Activated naive CD4-positive, alpha-beta T cell treated with anti-CD3 and anti-CD28 coated beads for 36 hours (primary cell): ENCODE measurements at regions of chr6 and their contacts with region 1.

Region 1: GRCh38 chr6:95431637-95432228 is 145.6 kb upstream of the MANEA start:
- DNase-seq: peak; percentile 62
- H3K4me3 Mint-ChIP-seq: no peak overlapping the region
- H3K27ac Mint-ChIP-seq: no peak overlapping the region
- H3K4me1 Mint-ChIP-seq: no peaks in the 10 kb centered on the region
- H3K27me3 Mint-ChIP-seq: peaks cover 2% of the 10 kb centered on the region

Region 2: GRCh38 chr6:95364016-95364604 is 67.6 kb before region 1 on chr6:
- CTCF ChIA-PET with region 1: no interaction called
- intact Hi-C with region 1: loop called (anchors 2 kb)
- DNase-seq: no peak
- H3K4me3 Mint-ChIP-seq: no peak overlapping the region
- H3K27ac Mint-ChIP-seq: no peak overlapping the region
- H3K4me1 Mint-ChIP-seq: no peaks in the 10 kb centered on the region
- H3K27me3 Mint-ChIP-seq: no peaks in the 10 kb centered on the region

Region 3: GRCh38 chr6:95469511-95469910 is 37.8 kb after region 1 on chr6:
- CTCF ChIA-PET with region 1: no interaction called
- intact Hi-C with region 1: no loop called
- DNase-seq: no peak
- H3K4me3 Mint-ChIP-seq: no peak overlapping the region
- H3K27ac Mint-ChIP-seq: no peak overlapping the region
- H3K4me1 Mint-ChIP-seq: no peaks in the 10 kb centered on the region
- H3K27me3 Mint-ChIP-seq: peaks cover 12% of the 10 kb centered on the region

Region 4: DNA sequence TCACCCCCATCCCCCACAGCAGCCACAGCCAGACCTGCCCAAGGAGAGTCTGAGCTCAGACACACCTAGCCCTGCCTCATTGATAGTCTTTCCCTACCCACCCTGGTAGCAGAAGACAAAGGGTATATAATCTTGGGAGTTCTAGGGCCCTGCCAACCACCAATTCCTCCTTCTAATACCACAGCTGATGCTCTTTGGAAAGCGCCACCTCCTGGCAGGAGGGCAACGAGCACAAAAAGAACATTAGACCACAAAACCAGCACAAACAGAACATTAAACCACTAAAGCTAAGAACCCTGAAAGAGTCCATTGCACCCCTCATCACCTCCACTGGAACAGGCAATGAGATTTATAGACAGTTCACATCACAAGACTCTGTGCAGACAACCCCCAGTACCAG is 388.2 kb after region 1 on chr6:
- CTCF ChIA-PET with region 1: no interaction called
- intact Hi-C with region 1: loop called (anchors 1 kb)
- DNase-seq: no peak
- H3K4me3 Mint-ChIP-seq: no peak overlapping the region
- H3K27ac Mint-ChIP-seq: no peak overlapping the region
- H3K4me1 Mint-ChIP-seq: no peaks in the 10 kb centered on the region
- H3K27me3 Mint-ChIP-seq: no peaks in the 10 kb centered on the region

Region 5: DNA sequence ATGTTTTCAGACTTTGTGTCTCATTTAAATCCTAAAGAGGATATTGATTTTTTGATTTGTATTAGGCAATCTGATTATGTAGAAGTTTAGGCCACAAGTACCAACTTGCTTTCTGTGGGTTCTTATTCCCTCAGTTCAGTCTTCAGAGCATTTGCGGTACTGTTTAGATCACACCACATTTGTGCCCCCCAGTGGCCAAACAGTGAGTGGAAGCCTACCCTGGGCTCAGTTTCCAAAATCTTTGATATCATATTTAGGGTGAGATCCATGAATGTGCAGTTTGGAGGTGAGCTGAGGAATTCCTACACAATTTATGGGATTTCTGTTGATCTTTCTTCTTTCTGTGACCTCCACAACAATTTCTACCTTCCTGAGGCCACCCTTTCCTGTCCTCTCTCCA is 491.8 kb after region 1 on chr6:
- CTCF ChIA-PET with region 1: no interaction called
- intact Hi-C with region 1: loop called (anchors 2 kb)
- DNase-seq: peak; percentile 9
- H3K4me3 Mint-ChIP-seq: no peak overlapping the region
- H3K27ac Mint-ChIP-seq: no peak overlapping the region
- H3K4me1 Mint-ChIP-seq: no peaks in the 10 kb centered on the region
- H3K27me3 Mint-ChIP-seq: no peaks in the 10 kb centered on the region

Region 6: DNA sequence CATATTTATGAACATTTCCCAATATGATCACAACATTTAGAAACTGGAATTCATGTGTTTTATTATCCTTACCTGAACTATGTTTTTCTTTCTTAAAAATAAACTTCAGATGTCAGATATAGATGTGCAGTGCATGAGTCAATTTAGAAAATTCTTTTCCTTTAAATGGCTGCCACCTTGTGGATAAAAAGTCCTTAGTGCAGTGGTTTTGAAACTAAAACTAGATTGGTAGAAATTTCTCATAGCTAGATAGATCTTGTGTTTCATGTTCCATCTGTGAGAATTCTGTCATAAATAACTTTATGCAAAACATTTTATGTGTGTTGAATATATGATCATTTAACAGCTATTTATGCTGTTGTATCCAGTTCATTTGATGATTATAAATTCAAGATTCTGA is 1627.7 kb after region 1 on chr6:
- CTCF ChIA-PET with region 1: no interaction called
- intact Hi-C with region 1: loop called (anchors 2 kb)
- DNase-seq: no peak
- H3K4me3 Mint-ChIP-seq: no peak overlapping the region
- H3K27ac Mint-ChIP-seq: no peak overlapping the region
- H3K4me1 Mint-ChIP-seq: peaks cover 2% of the 10 kb centered on the region
- H3K27me3 Mint-ChIP-seq: no peaks in the 10 kb centered on the region